ENCODE measurements at regions of chr3 and their contacts with region 1.

Region 1: DNA sequence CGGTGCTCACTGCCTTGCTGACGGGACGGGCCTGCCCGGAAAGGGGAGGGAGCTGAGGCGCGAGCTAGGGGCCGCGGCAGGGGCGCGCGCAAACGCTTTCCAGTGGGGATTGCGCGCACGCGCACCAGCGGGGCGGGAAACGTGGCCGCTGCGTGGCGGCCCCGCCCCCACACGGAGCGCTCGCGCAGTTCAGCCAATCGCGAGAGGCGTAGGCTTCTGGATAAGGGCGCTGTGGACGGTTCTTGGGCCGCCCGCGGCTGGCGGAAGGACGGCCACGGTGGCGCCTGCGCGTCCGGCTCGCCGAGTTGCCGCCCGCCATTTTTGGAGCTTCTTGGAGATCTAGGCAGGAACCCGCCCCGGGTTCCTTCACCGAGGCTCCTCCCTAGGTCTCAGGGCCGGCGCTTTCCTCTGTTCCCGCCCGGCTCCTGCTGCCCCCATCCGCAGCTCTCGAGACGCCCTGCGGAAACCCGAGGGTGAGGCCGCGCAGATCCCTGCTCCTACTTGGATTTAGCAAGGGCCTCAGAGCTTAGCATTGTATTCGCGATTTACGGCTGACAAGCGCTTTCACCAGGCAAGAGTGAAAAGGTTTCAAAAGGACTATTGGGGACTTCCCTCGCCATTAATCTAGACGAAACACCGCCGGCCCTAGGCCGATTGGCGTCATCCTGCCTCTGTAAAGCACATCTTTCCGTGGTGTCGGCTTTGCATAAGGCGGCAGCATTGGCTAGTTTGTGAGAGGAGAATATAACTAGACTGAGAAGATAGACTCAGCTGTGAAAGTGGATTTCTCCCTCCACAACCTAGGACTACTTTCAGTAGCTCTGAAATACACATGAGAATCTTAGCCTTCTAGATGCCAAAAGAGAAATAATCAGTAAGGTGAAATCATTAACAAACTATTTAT is 496 bp upstream of the STAG1 start:
- DNase-seq: peak; percentile 100
- ATAC-seq: peak; percentile 97

Region 2: DNA sequence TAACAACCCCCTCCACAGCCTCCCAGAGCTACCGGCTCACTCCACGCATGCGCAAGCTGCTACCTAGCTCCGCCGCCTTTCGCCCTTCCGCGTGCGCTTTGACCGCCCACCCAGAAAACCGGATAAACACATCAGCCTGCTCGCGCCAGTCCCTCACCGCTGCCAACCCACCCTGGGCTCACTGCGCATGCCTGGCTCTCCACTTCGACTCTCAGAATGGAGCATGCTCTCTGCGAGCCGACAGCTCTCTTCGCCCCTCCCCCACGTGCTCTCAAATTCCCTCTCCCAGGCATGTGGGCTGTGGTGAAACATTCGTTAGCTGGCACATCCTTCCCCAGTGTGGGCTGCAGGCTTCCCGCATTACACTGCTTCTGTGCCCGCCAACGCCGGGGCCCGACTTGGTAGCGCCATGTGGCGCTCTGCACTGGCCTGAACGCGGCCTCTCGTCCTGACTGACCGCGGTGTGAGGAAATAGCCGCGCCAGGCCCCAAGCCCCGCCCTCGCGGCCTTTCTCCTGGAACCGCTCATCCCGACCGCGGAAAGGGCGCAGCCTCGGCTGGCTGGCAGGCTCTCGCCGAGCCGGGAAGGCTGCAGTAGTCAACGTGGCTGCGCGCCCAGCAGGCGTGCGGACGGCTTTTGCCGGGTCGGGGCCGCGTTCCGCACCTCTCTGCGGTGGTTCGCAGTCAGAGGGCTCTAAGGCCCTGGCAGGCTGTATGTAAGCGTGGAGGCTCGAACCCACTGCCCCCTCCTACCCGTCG is 556.1 kb before region 1 on chr3:
- intact Hi-C with region 1: loop called (anchors 1 kb)
- DNase-seq: peak; percentile 99
- ATAC-seq: peak; percentile 90

Region 3: GRCh38 chr3:136390574-136390973 is 362.1 kb before region 1 on chr3:
- intact Hi-C with region 1: loop called (anchors 1 kb)
- DNase-seq: no peak
- ATAC-seq: no peak

Region 4: GRCh38 chr3:136861890-136862616 is 109.4 kb after region 1 on chr3 and contains the start of gene NCK1:
- intact Hi-C with region 1: loop called (anchors 2 kb)
- DNase-seq: peak; percentile 100
- ATAC-seq: peak; percentile 99
- total RNA-seq, gene NCK1: 25.0 TPM